Dorsolateral prefrontal cortex (tissue), 120 donors: ENCODE measurements at regions of chr4 and their contacts with region 1.

Region 1: DNA sequence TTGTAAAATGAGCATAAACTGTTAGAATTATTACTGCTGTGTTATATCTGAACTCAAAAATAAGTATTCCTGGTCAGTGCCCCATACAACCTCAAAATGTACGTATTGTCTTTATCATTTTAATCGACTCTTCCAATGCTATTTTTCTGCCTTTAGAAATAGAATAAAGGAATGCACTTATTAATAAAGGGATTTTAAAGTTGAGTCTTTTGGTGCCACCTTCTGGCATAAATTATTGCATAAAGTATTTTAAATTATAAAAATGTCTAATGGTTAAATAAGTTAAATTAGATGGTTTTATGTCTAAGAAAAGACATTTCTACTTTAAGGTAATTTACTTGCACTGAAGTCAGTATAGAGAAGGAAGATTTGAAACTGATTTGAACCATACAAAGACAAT is 424.0 kb upstream of the NDST4 start:
- DNase-seq: no peak
- H3K4me3 ChIP-seq: no peak overlapping the region
- H3K27ac ChIP-seq: no peak overlapping the region
- H3K27me3 ChIP-seq: no peaks in the 10 kb centered on the region
- CTCF ChIP-seq: peak in 51 of 56 donors; percentile 12 to 63 (median 36)

Region 2: DNA sequence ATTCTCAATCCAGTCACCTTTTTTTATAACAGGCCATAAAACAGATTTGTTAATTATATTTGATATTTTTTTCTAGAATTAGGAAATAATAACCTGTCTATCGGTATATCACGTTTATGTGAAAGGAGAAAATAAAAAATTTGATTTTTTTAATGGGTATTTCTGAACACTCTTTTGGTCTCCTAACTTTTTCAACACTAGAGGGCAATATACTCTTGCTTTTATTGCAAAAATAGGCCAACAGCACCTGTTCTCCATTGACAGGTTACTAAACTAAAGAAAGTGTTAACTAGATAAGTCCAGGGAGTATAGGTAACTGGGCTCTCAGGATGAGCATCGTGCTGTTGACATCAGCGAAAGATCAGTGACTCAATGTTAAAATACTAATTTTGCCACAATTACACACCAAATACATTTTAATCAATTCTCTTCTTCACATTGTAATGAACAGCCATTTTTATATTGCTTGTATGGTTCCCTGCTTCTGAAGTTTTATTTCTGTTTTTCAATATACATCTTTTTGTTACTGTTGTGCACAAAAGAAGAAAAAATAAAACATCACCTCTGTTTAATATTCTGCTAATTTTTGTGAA is 446.8 kb before region 1 on chr4:
- intact Hi-C with region 1: loop called in 1 of 2 experiments (anchors 5 kb)
- DNase-seq: no peak
- H3K4me3 ChIP-seq: no peak overlapping the region
- H3K27ac ChIP-seq: no peak overlapping the region
- H3K27me3 ChIP-seq: no peaks in the 10 kb centered on the region
- CTCF ChIP-seq: peak; percentile 46 to 80 (median 70)